Panc1 (cell line): ENCODE measurements at regions of chr3 and their contacts with region 1.

Region 1: DNA sequence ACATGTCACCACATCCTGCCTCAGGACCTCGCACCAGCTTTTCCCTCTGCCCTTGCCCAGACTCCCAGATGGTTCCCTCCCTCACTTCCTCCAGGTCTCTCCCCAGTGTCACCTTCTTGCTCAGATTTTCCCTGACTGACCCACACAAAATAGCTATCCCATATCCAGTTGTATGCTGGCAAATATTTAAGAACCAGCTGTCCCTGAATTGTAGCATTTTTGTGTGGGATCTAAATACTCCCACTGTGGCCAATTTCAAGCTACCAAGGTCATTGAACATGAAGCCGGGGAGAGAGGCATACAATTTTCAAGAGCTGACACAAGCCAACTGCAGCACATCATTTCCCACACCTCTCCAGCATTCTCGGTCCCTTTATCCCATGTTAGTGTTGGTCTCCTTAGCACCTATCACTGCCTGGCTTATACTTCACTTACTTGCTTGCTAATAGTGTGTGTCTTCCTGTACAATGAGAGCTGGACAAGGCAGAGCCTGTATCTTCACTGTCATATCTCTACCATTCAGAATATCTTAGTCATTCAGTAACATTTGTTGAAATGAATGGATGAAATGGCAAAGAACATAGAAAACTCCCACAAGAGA is 101.3 kb upstream of the CTNNB1 start:
- DNase-seq: no peak
- ATAC-seq: no peak
- H3K4me3 ChIP-seq: no peak overlapping the region
- H3K27ac ChIP-seq: no peak overlapping the region
- H3K4me1 ChIP-seq: no peaks in the 10 kb centered on the region
- H3K27me3 ChIP-seq: no peaks in the 10 kb centered on the region
- CTCF ChIP-seq: no peak

Region 2: DNA sequence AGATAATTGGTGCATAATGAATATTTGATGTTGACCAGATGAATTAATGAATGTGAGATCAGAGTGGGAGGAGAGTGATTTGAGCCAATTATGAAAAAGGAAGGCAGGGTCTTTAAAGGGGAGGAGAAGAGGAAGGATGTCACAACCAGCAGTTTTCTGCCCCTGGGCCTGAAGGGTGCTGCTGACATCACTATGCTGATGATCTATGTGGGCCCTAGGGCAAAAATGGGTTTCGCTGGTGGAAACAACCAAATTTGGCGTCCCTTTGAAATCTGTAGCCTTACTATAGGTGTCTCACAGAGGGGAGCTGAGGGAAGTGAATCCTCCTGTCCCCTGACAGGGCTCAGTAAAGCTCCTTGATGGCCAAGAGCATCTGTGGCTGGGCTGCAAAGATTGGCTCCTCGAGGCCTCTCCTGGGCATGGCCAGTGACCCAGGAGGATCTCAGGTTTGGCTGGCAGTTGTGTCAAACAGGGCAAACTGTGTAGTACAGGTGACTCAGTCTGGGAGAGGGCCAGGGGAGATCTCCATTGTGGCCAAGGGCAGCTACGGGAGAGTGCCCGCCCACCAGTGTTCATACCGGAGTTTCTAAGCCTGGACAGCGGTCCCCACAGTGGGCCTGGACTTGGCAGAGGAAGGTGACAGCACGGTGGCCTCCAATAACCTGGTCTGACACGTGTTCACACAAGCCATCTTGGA is 20.4 kb before region 1 on chr3:
- CTCF ChIA-PET with region 1: no interaction called
- POLR2A ChIA-PET with region 1: no interaction called
- in situ Hi-C with region 1: no loop called
- intact Hi-C with region 1: loop called (anchors 1 kb)
- DNase-seq: no peak
- ATAC-seq: no peak
- H3K4me3 ChIP-seq: no peak overlapping the region
- H3K27ac ChIP-seq: no peak overlapping the region
- H3K4me1 ChIP-seq: no peaks in the 10 kb centered on the region
- H3K27me3 ChIP-seq: no peaks in the 10 kb centered on the region
- CTCF ChIP-seq: no peak